Sciatic nerve (tissue), 2 donors: ENCODE measurements at regions of chr16 and their contacts with region 1.

Region 1: GRCh38 chr16:7888411-7888810 is 555.8 kb downstream of the RBFOX1 start:
- DNase-seq: no peak
- ATAC-seq: peak; percentile 28

Region 2: DNA sequence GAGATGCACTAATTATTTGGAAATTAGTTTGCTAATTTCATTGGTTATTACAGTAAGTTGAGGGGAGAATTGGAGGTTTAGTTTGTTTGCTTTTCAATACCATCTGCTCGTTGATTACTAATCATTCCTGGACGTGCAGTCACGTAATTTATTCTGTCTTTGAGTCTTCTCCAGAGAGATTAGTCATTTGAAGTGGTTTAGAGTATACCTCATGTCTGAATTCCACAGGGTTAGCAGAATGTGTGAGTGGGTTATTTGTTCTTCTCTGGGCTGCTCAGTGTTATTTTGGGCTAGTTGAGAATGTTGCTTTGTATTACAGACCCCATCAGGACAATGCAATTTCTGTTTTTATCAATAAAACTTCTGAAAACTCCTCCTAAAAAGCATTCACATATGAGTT is 290.7 kb before region 1 on chr16:
- intact Hi-C with region 1: loop called (anchors 5 kb)
- DNase-seq: no peak
- ATAC-seq: no peak

Region 3: GRCh38 chr16:8989099-8989878 is 1100.9 kb after region 1 on chr16:
- intact Hi-C with region 1: no loop called
- DNase-seq: no peak
- ATAC-seq: no peak